ENCODE measurements at regions of chr5 and their contacts with region 1.

Region 1: DNA sequence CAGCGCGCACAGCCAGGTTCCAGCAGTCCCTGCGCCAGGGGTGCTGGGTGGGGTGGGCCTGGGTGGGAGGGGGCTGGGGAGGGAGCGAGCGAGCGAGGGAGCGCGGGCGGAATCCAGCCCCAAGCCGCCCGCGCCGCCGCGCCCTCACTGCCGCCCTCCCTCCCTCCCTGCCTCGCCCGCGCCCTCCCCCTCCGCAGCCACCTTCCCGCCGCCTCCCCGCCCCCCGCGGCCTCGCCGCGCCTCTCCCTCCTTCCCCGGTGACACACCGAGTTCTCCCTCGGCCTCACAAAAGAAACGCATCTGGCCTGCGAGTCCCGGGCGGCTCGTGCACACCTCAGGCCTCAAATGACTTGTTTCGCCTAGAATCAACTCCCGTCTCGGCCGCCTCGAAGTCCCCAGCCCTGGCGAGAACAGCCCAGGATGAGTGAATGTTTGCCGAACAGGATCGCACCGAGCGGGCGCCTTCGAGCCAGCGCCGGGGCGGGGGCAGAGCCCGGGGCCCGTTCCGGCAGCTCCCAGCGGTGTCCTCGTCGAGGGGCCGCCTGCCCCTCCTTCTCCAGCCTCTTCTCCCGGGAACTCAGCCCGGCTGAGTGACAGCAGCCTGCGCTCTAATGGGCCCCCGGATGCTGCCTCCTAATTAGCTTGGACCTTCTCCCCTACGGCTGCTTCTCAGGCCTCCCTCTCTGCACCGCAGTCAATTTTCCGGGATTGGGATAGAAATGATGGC is 371 bp upstream of the PITX1 start:
- DNase-seq: no peak
- H3K4me3 ChIP-seq: peak overlapping the region; percentile 51 to 73
- H3K27ac ChIP-seq: no peak overlapping the region
- H3K4me1 ChIP-seq: peaks cover 16 to 22% of the 10 kb centered on the region in 2 donors
- H3K27me3 ChIP-seq: peaks cover 36% of the 10 kb centered on the region
- CTCF ChIP-seq: no peak

Region 2: DNA sequence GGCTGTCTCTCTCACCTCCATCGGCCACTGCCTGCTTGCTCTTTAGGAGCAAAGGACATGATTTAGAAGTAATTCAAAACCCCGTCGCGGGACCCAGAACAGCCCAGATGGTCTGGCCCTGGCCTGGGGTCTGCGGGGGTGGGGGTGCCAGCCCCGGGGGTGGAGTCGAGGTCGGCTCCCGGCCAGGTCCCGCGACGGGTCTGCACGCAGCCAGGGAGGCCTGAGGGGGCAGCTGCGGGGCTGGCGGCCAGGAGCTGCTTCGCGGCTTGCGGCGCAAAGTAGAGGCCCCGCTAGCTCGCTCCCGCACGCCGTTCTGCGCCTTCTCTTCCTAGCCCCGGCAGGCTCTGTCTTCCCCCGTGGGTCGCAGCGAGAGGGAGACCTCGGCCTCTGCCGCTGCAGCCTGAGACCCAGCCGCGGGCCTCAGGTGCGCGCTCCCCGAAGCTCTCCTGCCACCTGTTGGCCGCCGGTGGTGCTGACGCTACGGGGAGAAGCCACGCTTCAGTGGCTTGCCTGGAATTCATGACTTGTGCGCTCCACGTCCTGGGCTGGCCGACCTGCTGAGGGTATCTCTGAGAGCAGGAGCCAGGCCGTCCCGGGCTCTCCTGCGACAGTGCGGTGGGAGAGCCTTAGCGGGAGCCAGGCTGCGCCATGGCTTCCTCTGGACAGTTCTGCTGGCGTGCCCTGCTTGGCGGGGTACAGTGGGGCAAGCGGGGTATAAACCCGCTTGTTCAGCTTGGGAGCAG is 156.9 kb after region 1 on chr5:
- intact Hi-C with region 1: loop called (anchors 1 kb)
- DNase-seq: peak in 1 of 2 donors; percentile 84
- H3K4me3 ChIP-seq: peak overlapping the region; percentile 66 to 71
- H3K27ac ChIP-seq: no peak overlapping the region
- H3K4me1 ChIP-seq: peaks cover 3 to 9% of the 10 kb centered on the region in 2 donors
- H3K27me3 ChIP-seq: no peaks in the 10 kb centered on the region
- CTCF ChIP-seq: peak; percentile 84 to 98 (median 93)

Region 3: GRCh38 chr5:135535820-135536801 is 501.7 kb after region 1 on chr5 and contains the start of gene NEUROG1:
- intact Hi-C with region 1: no loop called
- DNase-seq: peak in 1 of 2 donors; percentile 46
- H3K4me3 ChIP-seq: peak within 1 kb of the TSS; percentile 12 to 14
- H3K27ac ChIP-seq: no peak within 1 kb of the TSS
- H3K4me1 ChIP-seq: peaks cover 0 to 4% of the 10 kb centered on the region in 2 donors
- H3K27me3 ChIP-seq: peaks cover 9% of the 10 kb centered on the region
- CTCF ChIP-seq: no peak
- total RNA-seq, gene NEUROG1: not detected

Region 4: GRCh38 chr5:135739383-135739981 is 705.1 kb after region 1 on chr5:
- intact Hi-C with region 1: no loop called
- DNase-seq: no peak
- H3K4me3 ChIP-seq: no peak overlapping the region
- H3K27ac ChIP-seq: no peak overlapping the region
- H3K4me1 ChIP-seq: no peaks in the 10 kb centered on the region
- H3K27me3 ChIP-seq: no peaks in the 10 kb centered on the region
- CTCF ChIP-seq: no peak

Measured in ascending aorta (tissue), 2 donors.